Dendritic cell treated with granulocyte-macrophage colony-stimulating factor and Interleukin-4, amounts not matched to agents 40 ng/mL and 50 ng/mL, for 4 days (primary cell): ENCODE measurements at regions of chr9 and their contacts with region 1.

Region 1: DNA sequence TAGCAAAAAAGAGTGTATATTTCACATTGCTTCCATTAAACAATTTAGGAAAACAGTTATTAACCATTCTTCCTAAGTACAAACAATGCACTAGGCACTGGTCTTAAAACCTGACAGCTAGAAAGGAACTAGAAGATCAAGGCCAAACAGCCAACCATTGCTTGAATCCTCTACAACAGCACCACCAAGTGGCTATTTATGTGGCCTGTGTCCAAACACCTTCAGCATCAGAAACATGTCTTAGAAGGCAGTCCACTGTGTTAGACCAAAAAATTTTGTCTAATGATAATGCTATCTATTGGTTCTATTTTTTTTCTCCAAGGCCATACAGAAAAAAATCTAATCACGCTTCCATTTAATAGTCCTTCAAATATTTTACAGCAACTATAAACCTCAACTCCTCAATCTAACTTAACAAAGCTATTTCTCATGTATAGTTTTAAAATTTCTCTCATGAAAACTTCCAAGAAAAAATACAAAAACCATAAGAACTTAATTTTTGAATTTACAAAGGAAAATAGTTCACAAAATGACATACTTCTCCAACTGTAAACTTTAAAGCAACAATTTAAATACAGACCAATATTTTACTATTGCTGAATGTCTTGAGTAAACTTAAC is 36.1 kb downstream of the CAAP1 start:
- H3K4me3 Mint-ChIP-seq: no peak overlapping the region
- H3K27ac Mint-ChIP-seq: no peak overlapping the region
- H3K4me1 Mint-ChIP-seq: no peaks in the 10 kb centered on the region
- H3K27me3 Mint-ChIP-seq: no peaks in the 10 kb centered on the region

Region 2: GRCh38 chr9:26744191-26744965 is 112.1 kb before region 1 on chr9:
- intact Hi-C with region 1: loop called (anchors 1 kb)
- H3K4me3 Mint-ChIP-seq: no peak overlapping the region
- H3K27ac Mint-ChIP-seq: no peak overlapping the region
- H3K4me1 Mint-ChIP-seq: no peaks in the 10 kb centered on the region
- H3K27me3 Mint-ChIP-seq: no peaks in the 10 kb centered on the region